Activated CD4-positive, alpha-beta T cell treated with anti-CD3 and anti-CD28 coated beads, Interleukin-2, amount 10 ng/mL, durations not matched to agents 24 days and 14 days (primary cell): ENCODE measurements at regions of chr2 and their contacts with region 1.

Region 1: GRCh38 chr2:54522624-54523281 is 66.6 kb downstream of the SPTBN1 start:
- DNase-seq: peak; percentile 90
- H3K4me3 Mint-ChIP-seq: no peak overlapping the region
- H3K27ac Mint-ChIP-seq: no peak overlapping the region
- H3K4me1 Mint-ChIP-seq: peaks cover 17% of the 10 kb centered on the region
- H3K27me3 Mint-ChIP-seq: peaks cover 21% of the 10 kb centered on the region

Region 2: GRCh38 chr2:54106631-54107454 is 415.9 kb before region 1 on chr2:
- intact Hi-C with region 1: loop called (anchors 5 kb)
- DNase-seq: peak; percentile 84
- H3K4me3 Mint-ChIP-seq: no peak overlapping the region
- H3K27ac Mint-ChIP-seq: no peak overlapping the region
- H3K4me1 Mint-ChIP-seq: peaks cover 8% of the 10 kb centered on the region
- H3K27me3 Mint-ChIP-seq: peaks cover 11% of the 10 kb centered on the region

Region 3: GRCh38 chr2:54570925-54571694 is 48.4 kb after region 1 on chr2:
- intact Hi-C with region 1: loop called (anchors 2 kb)
- DNase-seq: peak; percentile 95
- H3K4me3 Mint-ChIP-seq: peak overlapping the region; percentile 79
- H3K27ac Mint-ChIP-seq: peak overlapping the region; percentile 96
- H3K4me1 Mint-ChIP-seq: peaks cover 78% of the 10 kb centered on the region
- H3K27me3 Mint-ChIP-seq: no peaks in the 10 kb centered on the region

Region 4: DNA sequence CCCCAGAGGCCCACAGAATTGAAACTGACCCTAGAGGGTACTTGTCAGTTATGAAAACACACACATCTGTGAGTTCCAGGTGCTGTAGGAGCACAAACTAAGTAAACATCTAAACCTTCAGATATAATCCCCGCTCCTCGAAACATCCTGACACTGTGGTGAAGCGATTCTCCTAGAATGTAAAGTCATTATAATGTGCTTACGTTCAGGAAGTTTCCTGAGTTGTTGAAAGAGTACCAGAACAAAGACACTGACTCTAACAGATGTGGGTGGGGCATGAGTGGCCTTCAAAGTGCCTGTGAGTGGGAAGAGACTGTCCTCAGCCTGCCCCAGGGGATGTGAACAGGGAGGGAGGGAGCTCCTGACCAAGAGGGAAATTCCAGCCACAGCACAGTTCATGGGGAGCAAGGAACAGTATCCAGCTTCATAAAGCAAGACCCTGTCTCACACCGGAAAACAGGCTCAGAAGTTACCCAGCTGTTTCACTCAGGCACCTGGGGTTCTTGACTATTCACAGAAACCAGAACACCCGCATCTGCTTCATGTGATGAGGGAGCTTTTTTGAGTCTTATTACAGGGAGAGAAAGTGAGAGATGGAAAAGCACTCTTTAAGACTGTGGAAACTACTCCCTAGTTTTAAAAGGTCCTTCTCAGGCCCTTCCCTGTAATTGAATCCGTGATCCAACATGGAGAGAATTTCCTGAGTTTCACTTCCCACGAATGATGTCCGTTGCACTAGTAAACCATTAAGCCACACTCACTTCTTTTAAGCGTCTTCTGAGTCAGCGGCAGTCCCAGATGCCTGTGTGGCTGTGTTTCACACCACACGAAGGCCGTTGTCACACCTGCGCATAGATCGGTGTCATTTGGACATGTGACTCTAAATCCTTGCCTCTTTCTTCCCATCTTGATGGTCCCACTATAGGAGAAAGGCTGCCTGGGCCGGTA is 112.1 kb after region 1 on chr2:
- intact Hi-C with region 1: loop called (anchors 2 kb)
- DNase-seq: peak; percentile 72
- H3K4me3 Mint-ChIP-seq: peak overlapping the region; percentile 53
- H3K27ac Mint-ChIP-seq: peak overlapping the region; percentile 84
- H3K4me1 Mint-ChIP-seq: peaks cover 31% of the 10 kb centered on the region
- H3K27me3 Mint-ChIP-seq: no peaks in the 10 kb centered on the region

Region 5: GRCh38 chr2:54680397-54681041 is 157.8 kb after region 1 on chr2:
- intact Hi-C with region 1: loop called (anchors 1 kb)
- DNase-seq: peak; percentile 80
- H3K4me3 Mint-ChIP-seq: peak overlapping the region; percentile 77
- H3K27ac Mint-ChIP-seq: peak overlapping the region; percentile 63
- H3K4me1 Mint-ChIP-seq: peaks cover 49% of the 10 kb centered on the region
- H3K27me3 Mint-ChIP-seq: peaks cover 47% of the 10 kb centered on the region

Region 6: DNA sequence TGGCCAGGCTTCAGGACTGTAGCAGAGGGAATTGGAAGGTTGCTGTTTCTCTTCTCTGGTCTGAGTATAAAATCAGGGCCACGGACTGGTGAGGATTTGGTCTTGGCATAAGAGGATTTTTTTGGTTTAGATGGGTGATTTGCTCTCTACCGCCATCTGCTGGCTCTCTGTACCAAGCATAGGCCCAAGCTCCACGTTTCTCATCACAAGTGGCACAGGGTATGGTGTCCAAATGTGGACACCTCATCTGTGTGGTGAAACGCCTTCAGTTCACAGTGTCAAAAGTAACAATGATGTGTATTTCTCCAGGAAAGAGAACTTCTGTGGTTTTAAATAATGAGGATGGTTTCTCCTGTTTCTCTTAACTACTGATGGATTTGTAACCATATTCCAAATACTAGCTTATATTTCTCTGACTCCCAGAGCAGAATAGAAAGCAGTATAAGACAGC is 315.9 kb after region 1 on chr2:
- intact Hi-C with region 1: loop called (anchors 1 kb)
- DNase-seq: peak; percentile 86
- H3K4me3 Mint-ChIP-seq: no peak overlapping the region
- H3K27ac Mint-ChIP-seq: no peak overlapping the region
- H3K4me1 Mint-ChIP-seq: no peaks in the 10 kb centered on the region
- H3K27me3 Mint-ChIP-seq: no peaks in the 10 kb centered on the region